ENCODE measurements at regions of chr5 and their contacts with region 1.

Region 1: DNA sequence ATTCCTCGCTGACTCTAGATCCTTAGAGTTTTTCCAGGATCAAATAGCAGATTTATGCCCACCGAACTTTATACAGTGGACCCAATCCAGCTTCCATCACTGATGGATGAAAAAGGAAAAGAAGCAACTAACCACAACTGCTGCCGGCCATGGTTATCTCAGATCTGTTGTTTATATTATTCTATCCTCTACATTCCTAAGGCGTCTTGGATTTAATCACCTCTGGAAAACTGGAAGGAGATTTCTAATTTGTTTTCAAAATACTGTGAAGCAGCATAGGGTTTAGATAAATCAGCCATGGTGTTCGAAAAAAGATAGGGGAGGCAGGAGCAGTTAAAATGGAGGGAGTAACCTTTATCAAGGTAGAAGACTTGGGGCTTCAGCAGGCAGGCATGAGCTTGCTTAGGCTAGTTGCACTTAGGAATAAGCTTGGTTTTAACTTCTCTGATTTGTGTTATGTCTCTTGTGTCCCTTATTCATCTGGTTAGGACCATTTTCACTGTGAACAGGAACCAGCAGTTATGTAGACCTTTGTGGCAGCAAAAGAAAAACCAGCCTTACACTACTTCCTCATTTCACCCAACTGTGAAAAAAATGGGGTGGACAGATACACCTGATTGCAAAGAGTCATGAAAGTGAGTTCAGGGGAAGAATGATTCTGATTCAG is 832 bp upstream of the ZNF366 start:
- DNase-seq: no peak
- H3K4me3 ChIP-seq: peak overlapping the region in 2 of 8 donors; percentile 22 to 61
- H3K27ac ChIP-seq: peak overlapping the region; percentile 8 to 80 (median 68)
- H3K4me1 ChIP-seq: peaks cover 13 to 76% (median 41%) of the 10 kb centered on the region in 6 donors
- H3K27me3 ChIP-seq: no peaks in the 10 kb centered on the region
- CTCF ChIP-seq: no peak
- POLR2A ChIP-seq: no peak

Region 2: GRCh38 chr5:72451741-72452505 is 56.1 kb before region 1 on chr5:
- intact Hi-C with region 1: loop called (anchors 10 kb)
- DNase-seq: peak; percentile 85
- H3K4me3 ChIP-seq: peak overlapping the region in 1 of 8 donors; percentile 15
- H3K27ac ChIP-seq: peak overlapping the region; percentile 83 to 92 (median 88)
- H3K4me1 ChIP-seq: peaks cover 30 to 62% (median 47%) of the 10 kb centered on the region in 6 donors
- H3K27me3 ChIP-seq: no peaks in the 10 kb centered on the region
- CTCF ChIP-seq: no peak
- POLR2A ChIP-seq: no peak